ENCODE measurements at regions of chr7 and their contacts with region 1.

Region 1: GRCh38 chr7:909358-910329 is 33.3 kb downstream of the GET4 start:
- DNase-seq: peak; percentile 22
- H3K4me3 Mint-ChIP-seq: peak overlapping the region; percentile 36
- H3K27ac Mint-ChIP-seq: no peak overlapping the region
- H3K4me1 Mint-ChIP-seq: peaks cover 12% of the 10 kb centered on the region
- H3K27me3 Mint-ChIP-seq: peaks cover 18% of the 10 kb centered on the region
- CTCF ChIP-seq: no peak

Region 2: DNA sequence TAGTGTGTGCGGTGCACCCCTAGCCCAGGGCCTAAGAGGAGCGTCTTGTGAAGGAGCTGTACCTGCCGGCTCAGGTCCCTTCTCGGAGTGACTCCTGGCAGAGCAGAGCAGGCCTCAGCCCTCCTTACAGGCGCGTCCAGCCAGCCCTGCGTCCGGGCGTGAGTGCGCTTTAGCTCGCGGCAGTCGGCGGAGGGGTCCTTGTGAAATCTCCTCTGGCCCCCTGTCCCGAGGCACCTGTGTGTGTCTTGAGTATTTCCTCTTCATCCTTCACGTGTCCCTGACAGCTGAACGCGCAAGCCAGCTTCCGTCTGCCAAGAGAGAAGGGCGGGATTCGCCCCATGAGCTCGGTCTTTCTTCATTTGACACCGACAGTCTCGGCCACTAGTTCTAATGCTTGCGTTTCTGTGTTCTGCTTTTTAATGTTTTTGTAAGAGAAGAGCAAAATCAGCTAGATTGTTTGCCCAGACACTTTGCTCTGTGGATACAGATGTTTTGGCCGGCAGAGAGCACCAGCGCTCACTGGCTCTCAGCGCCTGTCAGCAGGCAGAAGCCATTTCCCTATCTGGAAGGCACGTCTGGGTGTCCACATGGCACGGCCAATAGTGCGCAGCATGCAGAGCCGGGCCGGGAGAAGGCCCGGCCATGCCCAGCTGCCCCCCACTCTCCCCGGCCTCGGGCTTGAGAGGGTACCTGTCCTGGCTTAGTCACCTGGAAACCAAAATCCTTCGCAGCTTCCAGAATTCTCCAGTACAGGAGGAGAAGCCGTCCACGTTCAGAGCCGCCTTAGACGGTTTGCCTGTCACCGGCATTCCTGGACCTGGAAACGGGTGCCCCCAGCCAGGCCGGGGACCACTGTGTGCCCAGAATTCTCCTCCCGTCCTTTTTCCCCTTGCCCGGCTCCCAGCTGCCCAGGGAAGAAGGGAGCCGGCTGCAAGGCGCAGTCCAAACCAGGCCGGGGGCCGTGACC is 26.3 kb before region 1 on chr7:
- CTCF ChIA-PET with region 1: no interaction called
- POLR2A ChIA-PET with region 1: no interaction called
- intact Hi-C with region 1: no loop called
- DNase-seq: no peak
- H3K4me3 Mint-ChIP-seq: no peak overlapping the region
- H3K27ac Mint-ChIP-seq: no peak overlapping the region
- H3K4me1 Mint-ChIP-seq: no peaks in the 10 kb centered on the region
- H3K27me3 Mint-ChIP-seq: no peaks in the 10 kb centered on the region
- CTCF ChIP-seq: no peak

Region 3: GRCh38 chr7:954330-955238 is 44.9 kb after region 1 on chr7 and contains the start of gene ADAP1:
- CTCF ChIA-PET with region 1: interaction called, 4 read pairs
- POLR2A ChIA-PET with region 1: interaction called, 3 read pairs
- intact Hi-C with region 1: loop called (anchors 2 kb)
- DNase-seq: peak; percentile 49
- H3K4me3 Mint-ChIP-seq: peak within 1 kb of the TSS; percentile 63
- H3K27ac Mint-ChIP-seq: no peak within 1 kb of the TSS
- H3K4me1 Mint-ChIP-seq: no peaks in the 10 kb centered on the region
- H3K27me3 Mint-ChIP-seq: no peaks in the 10 kb centered on the region
- CTCF ChIP-seq: no peak
- total RNA-seq, gene ADAP1: 7.0 and 10.5 TPM in 2 replicates

Region 4: DNA sequence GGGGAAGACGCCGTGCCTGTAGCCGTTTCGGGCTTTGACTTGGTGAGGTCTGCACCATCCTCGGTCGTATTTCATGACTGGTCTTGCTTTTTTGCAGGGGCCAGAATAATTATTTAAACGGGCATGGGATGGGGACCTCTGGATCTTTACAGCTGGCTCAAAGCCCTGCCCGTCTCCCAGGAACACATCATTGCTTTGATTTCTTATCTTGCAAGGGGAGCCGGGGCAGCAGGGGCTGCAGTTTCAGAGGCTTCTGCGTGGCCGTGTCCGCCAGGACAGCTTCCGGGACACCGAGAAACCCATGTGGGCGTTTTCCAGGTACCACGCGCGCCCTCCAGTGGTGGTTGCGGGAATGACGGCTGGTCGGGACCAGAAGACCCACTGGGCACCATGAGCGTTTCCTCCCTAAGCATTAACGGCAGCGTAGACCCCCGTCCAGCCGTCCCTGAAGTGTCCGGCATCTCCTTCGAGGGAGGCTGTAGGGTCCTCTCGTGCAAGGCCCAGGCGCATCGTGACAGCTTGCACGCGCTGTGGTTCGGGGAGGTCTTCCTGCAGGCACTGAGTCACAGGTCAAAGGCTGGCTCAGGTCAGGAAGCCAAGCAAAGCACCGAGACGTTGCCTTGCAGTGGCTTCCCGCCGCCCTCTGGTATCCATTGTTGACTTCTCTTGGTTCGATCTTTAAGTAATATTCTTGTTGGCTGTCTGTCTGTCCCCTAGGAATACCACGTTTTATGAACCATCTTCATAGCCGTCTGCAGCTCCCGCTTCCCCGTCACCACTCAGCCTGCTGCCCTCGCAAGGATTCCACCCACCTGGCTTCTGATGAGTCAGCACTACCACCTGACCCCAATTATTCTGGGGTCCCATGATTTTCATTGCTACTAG is 266.6 kb after region 1 on chr7:
- CTCF ChIA-PET with region 1: interaction called, 3 read pairs
- POLR2A ChIA-PET with region 1: no interaction called
- intact Hi-C with region 1: loop called (anchors 2 kb)
- DNase-seq: peak; percentile 79
- H3K4me3 Mint-ChIP-seq: peak overlapping the region; percentile 54
- H3K27ac Mint-ChIP-seq: peak overlapping the region; percentile 35
- H3K4me1 Mint-ChIP-seq: peaks cover 5% of the 10 kb centered on the region
- H3K27me3 Mint-ChIP-seq: no peaks in the 10 kb centered on the region
- CTCF ChIP-seq: peak; percentile 93

Measured in MCF 10A (cell line).